ENCODE measurements at regions of chr2 and their contacts with region 1.

Region 1: DNA sequence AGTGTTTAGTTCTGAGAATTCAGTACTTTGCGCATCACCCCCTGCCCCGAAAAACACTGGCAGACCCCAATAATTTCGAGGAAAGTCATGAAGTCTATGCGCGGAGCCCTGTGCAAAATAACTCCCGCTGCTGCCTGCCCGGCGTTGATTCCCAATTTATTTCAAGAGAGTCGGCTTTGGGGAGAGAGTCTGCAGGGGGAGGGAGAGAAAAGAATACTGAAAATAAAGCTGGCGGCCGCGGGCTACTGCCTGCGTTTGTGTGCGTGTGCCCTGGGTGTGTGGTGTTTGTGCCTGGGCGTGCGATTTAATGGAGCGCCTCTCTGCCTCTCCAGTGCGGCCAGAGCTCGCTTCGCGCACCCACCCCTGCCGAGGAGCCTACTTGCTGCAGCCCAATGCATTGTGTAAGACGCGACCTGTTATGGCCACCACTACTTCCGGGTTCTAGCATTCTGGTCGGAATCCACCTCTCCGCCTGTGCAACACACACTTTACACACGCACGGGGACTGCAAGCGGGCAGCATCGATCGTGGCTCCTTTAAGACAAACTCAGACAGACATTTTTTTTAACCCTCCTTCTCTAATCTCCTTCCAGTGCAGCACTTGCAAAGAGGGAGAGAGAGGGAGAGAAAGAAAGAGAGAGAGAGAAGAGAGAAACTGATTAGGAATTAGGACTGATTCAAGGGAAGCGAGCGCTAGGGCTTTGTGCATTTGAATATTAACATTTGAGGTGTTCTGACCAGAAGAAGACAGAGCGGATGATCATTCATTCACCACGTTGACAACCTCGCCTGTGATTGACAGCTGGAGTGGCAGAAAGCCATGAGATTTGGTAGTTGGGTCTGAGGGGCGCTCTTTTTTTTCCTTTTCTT is at the start of gene MEIS1:
- DNase-seq: peak; percentile 95
- H3K4me3 ChIP-seq: peak within 1 kb of the TSS; percentile 64 to 97 (median 97)
- H3K27ac ChIP-seq: peak within 1 kb of the TSS; percentile 87
- H3K4me1 ChIP-seq: peaks cover 23% of the 10 kb centered on the region
- H3K27me3 ChIP-seq: peaks cover 0 to 6% of the 10 kb centered on the region in 2 experiments
- CTCF ChIP-seq: no peak
- POLR2A ChIP-seq: peak; percentile 90
- total RNA-seq, gene MEIS1: 26.3 and 26.5 TPM in 2 replicates

Region 2: GRCh38 chr2:66481100-66481549 is 46.2 kb after region 1 on chr2:
- CTCF ChIA-PET with region 1: no interaction called
- POLR2A ChIA-PET with region 1: no interaction called
- dilution Hi-C with region 1: no loop called
- intact Hi-C with region 1: loop called (anchors 1 kb)
- DNase-seq: peak; percentile 93
- H3K4me3 ChIP-seq: peak overlapping the region in 1 of 3 experiments; percentile 5
- H3K27ac ChIP-seq: peak overlapping the region; percentile 90
- H3K4me1 ChIP-seq: peaks cover 27% of the 10 kb centered on the region
- H3K27me3 ChIP-seq: no peaks in the 10 kb centered on the region
- CTCF ChIP-seq: no peak
- POLR2A ChIP-seq: no peak

Region 3: GRCh38 chr2:66574701-66575624 is 140.0 kb after region 1 on chr2:
- CTCF ChIA-PET with region 1: interaction called, 154 read pairs
- POLR2A ChIA-PET with region 1: interaction called, 16 read pairs
- dilution Hi-C with region 1: no loop called
- intact Hi-C with region 1: loop called (anchors 1 kb)
- DNase-seq: peak; percentile 81
- H3K4me3 ChIP-seq: peak overlapping the region; percentile 56 to 92 (median 85)
- H3K27ac ChIP-seq: peak overlapping the region; percentile 74
- H3K4me1 ChIP-seq: peaks cover 18% of the 10 kb centered on the region
- H3K27me3 ChIP-seq: peaks cover 32 to 38% of the 10 kb centered on the region in 2 experiments
- CTCF ChIP-seq: peak; percentile 45 to 60
- POLR2A ChIP-seq: no peak

Region 4: GRCh38 chr2:67015681-67016080 is 580.8 kb after region 1 on chr2:
- CTCF ChIA-PET with region 1: no interaction called
- POLR2A ChIA-PET with region 1: no interaction called
- dilution Hi-C with region 1: no loop called
- intact Hi-C with region 1: no loop called
- DNase-seq: no peak
- H3K4me3 ChIP-seq: no peak overlapping the region
- H3K27ac ChIP-seq: no peak overlapping the region
- H3K4me1 ChIP-seq: no peaks in the 10 kb centered on the region
- H3K27me3 ChIP-seq: peaks cover 0 to 2% of the 10 kb centered on the region in 2 experiments
- CTCF ChIP-seq: no peak
- POLR2A ChIP-seq: no peak

Region 5: GRCh38 chr2:67397143-67397986 is 962.5 kb after region 1 on chr2 and contains the start of gene ETAA1:
- CTCF ChIA-PET with region 1: no interaction called
- POLR2A ChIA-PET with region 1: interaction called, 4 read pairs
- dilution Hi-C with region 1: no loop called
- intact Hi-C with region 1: loop called (anchors 1 kb)
- DNase-seq: peak; percentile 88
- H3K4me3 ChIP-seq: peak within 1 kb of the TSS; percentile 89 to 93 (median 90)
- H3K27ac ChIP-seq: peak within 1 kb of the TSS; percentile 83
- H3K4me1 ChIP-seq: peaks cover 65% of the 10 kb centered on the region
- H3K27me3 ChIP-seq: no peaks in the 10 kb centered on the region
- CTCF ChIP-seq: no peak
- POLR2A ChIP-seq: peak; percentile 70
- total RNA-seq, gene ETAA1: 15.9 and 17.5 TPM in 2 replicates

Region 6: GRCh38 chr2:67846370-67847070 is 1411.6 kb after region 1 on chr2:
- CTCF ChIA-PET with region 1: interaction called, 4 read pairs
- POLR2A ChIA-PET with region 1: interaction called, 3 read pairs
- dilution Hi-C with region 1: no loop called
- intact Hi-C with region 1: loop called (anchors 2 kb)
- DNase-seq: peak; percentile 96
- H3K4me3 ChIP-seq: peak overlapping the region in 1 of 3 experiments; percentile 14
- H3K27ac ChIP-seq: peak overlapping the region; percentile 44
- H3K4me1 ChIP-seq: peaks cover 6% of the 10 kb centered on the region
- H3K27me3 ChIP-seq: no peaks in the 10 kb centered on the region
- CTCF ChIP-seq: peak; percentile 68 to 71
- POLR2A ChIP-seq: no peak

Region 7: DNA sequence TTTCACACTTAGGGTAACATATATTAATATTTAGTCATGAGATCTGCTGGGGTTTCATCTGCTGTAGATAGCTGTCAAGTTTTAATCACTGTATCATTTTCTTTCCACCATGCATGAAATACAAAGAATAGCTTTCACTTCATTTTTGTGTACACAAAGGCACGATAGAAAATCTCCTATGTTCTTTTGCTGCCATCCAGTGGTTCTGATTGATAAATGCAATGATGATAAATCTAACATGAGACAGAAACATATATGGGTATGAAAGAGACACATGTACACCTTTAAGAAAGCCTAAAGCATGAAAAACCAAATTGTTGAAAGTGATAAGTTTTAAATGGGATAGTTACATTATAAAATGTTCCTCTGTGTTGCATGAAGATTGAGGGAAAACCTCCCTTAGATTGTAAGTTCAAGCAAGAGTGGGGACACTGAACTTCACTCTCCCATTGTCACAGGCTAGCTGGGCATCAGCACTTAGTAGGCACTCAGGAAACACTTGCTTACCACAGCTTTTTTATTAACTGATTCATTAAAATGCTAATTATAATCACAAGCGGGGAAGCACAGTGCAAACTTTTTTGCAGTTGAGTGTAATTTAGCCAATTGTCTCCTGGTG is 1596.7 kb after region 1 on chr2:
- CTCF ChIA-PET with region 1: interaction called, 27 read pairs
- POLR2A ChIA-PET with region 1: no interaction called
- dilution Hi-C with region 1: no loop called
- intact Hi-C with region 1: no loop called
- DNase-seq: peak; percentile 79
- H3K4me3 ChIP-seq: no peak overlapping the region
- H3K27ac ChIP-seq: no peak overlapping the region
- H3K4me1 ChIP-seq: peaks cover 6% of the 10 kb centered on the region
- H3K27me3 ChIP-seq: no peaks in the 10 kb centered on the region
- CTCF ChIP-seq: peak; percentile 19 to 34
- POLR2A ChIP-seq: no peak